ENCODE measurements at regions of chr21 and their contacts with region 1.

Region 1: DNA sequence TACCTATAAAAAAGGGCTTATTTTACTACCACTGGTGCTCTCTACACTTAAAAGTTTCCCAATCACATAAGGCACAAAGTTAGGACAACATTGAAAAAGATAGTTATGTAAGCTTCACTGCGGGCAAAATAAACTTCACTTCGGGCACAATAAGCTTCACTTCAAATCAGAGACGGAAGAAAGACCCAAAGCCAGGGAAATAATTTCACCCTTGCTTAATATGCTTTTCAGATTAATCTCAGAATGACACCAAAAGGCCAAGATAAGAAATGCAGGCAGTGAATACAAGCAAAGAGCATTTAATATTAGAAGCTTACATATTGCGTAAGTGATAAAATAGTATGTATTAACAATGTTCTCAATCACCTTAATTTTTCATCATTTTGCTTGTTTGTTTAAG is 444.2 kb downstream of the SETD4 start:
- DNase-seq: no peak
- H3K4me3 ChIP-seq: no peak overlapping the region
- H3K27ac ChIP-seq: no peak overlapping the region
- H3K27me3 ChIP-seq: peaks cover 0 to 6% (median 0%) of the 10 kb centered on the region in 45 donors
- CTCF ChIP-seq: peak in 54 of 56 donors; percentile 11 to 78 (median 46)

Region 2: GRCh38 chr21:35503671-35504070 is 112.4 kb before region 1 on chr21:
- intact Hi-C with region 1: no loop called
- DNase-seq: no peak
- H3K4me3 ChIP-seq: no peak overlapping the region
- H3K27ac ChIP-seq: peak overlapping the region in 10 of 59 donors; percentile 1 to 67 (median 28)
- H3K27me3 ChIP-seq: peaks cover 0 to 44% (median 10%) of the 10 kb centered on the region in 45 donors
- CTCF ChIP-seq: no peak

Region 3: DNA sequence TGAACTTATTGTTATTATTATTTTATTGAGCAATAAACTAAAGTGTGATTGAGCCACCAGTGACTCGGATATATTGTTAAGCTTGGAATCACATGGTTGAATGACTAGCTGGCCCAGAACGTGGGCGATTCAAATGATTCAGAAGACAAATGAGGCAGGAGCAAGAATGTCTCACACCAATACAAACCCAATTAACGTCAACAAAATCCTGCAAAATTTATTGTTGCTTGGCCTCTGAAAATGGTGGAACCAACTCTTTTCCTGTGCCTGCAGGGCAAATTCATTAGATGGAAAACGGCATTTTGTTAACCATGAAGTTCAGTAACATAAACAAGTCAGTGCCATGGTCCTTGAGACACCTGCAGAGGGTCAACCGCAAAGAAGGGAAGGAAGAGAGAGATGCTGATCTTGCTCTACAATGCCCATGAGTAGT is 37.7 kb before region 1 on chr21:
- intact Hi-C with region 1: loop called in 1 of 2 experiments (anchors 2 kb)
- DNase-seq: no peak
- H3K4me3 ChIP-seq: no peak overlapping the region
- H3K27ac ChIP-seq: no peak overlapping the region
- H3K27me3 ChIP-seq: peaks cover 0 to 17% (median 0%) of the 10 kb centered on the region in 45 donors
- CTCF ChIP-seq: no peak

Region 4: DNA sequence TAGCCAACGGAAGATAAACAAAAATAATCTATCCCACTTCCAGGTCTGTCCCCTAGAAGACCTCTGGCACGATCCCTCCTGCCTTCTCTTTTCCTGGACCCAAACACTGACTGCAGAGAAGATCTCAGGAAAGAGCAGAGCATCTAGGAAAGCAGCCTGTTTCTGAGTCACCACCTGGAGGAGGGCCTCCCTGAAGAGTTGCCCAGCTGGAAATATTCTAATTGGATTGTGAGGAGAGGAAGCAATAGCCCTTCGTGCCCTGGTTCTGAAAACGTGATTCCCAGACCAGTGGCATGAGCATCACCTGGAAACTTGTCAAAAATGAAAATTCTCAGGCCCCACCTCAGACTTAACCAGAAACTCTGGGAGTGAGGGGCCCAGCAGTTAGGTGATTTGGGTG is 33.1 kb after region 1 on chr21:
- intact Hi-C with region 1: no loop called
- DNase-seq: no peak
- H3K4me3 ChIP-seq: no peak overlapping the region
- H3K27ac ChIP-seq: no peak overlapping the region
- H3K27me3 ChIP-seq: peaks cover 0 to 29% (median 0%) of the 10 kb centered on the region in 45 donors
- CTCF ChIP-seq: no peak

Measured in dorsolateral prefrontal cortex (tissue), 120 donors.